ENCODE measurements at regions of chr13 and their contacts with region 1.

Region 1: GRCh38 chr13:46615888-46616531 is 63.0 kb downstream of the LRCH1 start:
- DNase-seq: no peak

Region 2: GRCh38 chr13:46577696-46578589 is 38.1 kb before region 1 on chr13:
- intact Hi-C with region 1: no loop called
- DNase-seq: no peak

Region 3: GRCh38 chr13:46679369-46680120 is 63.5 kb after region 1 on chr13:
- intact Hi-C with region 1: loop called (anchors 5 kb)
- DNase-seq: no peak